ENCODE measurements at regions of chr20 and their contacts with region 1.

Region 1: GRCh38 chr20:1503564-1504227 is 12.5 kb upstream of the SIRPB2 start:
- DNase-seq: peak; percentile 85
- H3K4me3 Mint-ChIP-seq: no peak overlapping the region
- H3K27ac Mint-ChIP-seq: no peak overlapping the region
- H3K4me1 Mint-ChIP-seq: peaks cover 7% of the 10 kb centered on the region
- H3K27me3 Mint-ChIP-seq: peaks cover 57% of the 10 kb centered on the region

Region 2: DNA sequence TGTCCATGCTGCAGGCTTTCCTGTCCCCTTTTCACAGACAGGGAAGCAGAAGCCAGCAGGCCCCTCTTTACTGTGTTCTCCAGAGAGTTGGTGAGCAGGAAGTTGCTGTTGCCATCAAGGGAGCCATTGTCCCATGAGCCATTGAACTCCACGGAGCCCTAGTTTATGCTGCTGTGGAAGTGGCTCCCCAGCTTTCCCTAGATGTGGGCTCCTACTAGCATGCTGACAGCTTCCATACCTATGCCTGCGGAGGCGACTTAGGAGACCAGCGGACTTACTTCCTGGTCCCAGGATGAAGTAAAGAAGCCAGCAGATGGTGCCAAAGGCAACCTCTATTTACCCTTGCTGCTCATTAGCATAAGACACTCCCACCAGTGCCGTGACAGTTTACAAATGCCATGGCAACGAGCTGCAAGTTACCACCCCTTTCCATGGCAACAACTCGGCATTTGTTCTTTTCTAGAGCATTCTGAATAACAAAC is 80.0 kb before region 1 on chr20:
- CTCF ChIA-PET with region 1: no interaction called
- DNase-seq: peak; percentile 49
- H3K4me3 Mint-ChIP-seq: no peak overlapping the region
- H3K27ac Mint-ChIP-seq: no peak overlapping the region
- H3K4me1 Mint-ChIP-seq: peaks cover 33% of the 10 kb centered on the region
- H3K27me3 Mint-ChIP-seq: peaks cover 21% of the 10 kb centered on the region

Region 3: DNA sequence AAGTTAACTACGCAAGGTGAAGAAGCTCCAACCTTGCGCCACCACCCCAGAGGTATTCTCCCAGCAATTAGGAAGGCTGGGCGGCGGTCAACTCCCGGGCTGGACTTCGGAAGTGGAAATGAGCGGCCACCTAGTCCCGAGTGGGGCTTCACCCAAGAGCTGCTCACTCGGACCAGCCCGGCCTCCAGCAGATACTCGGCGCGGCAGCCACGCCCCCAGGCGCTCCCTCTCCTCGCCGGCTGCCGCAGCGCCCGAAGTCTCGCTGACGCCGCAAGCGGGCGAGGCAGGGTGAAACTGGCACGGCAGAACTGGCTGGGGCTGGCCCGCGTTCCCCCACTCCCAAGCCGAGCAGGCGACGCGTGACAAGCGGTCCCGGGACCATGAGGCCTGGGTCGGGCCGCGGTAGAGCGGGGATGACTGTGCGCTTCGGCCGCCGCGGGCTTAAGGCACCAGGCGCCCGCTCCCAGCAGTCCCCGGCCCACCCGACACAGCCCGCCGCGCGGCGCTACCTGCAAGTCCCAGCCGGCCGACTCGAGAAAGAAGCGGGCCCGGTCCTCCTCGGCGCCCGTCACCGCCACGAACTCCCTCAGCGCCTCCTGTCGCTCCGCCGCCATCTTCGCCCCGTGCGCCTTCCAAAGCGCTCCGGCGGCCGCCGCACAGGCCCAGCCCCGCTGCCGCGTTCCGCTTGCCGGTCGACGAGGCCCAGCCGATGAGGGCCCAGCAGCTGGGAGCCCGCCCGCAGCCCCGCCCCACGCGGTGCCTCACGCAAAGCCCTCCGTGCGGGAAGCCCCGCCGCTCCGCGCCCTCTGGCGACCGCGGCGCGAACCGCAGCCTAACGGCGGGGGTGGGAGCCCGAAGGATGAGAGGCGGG is 37.2 kb before region 1 on chr20 and contains the start of gene NSFL1C:
- CTCF ChIA-PET with region 1: interaction called, 19 read pairs
- DNase-seq: peak; percentile 97
- H3K4me3 Mint-ChIP-seq: peak within 1 kb of the TSS; percentile 78
- H3K27ac Mint-ChIP-seq: peak within 1 kb of the TSS; percentile 77
- H3K4me1 Mint-ChIP-seq: peaks cover 47% of the 10 kb centered on the region
- H3K27me3 Mint-ChIP-seq: peaks cover 30% of the 10 kb centered on the region

Region 4: DNA sequence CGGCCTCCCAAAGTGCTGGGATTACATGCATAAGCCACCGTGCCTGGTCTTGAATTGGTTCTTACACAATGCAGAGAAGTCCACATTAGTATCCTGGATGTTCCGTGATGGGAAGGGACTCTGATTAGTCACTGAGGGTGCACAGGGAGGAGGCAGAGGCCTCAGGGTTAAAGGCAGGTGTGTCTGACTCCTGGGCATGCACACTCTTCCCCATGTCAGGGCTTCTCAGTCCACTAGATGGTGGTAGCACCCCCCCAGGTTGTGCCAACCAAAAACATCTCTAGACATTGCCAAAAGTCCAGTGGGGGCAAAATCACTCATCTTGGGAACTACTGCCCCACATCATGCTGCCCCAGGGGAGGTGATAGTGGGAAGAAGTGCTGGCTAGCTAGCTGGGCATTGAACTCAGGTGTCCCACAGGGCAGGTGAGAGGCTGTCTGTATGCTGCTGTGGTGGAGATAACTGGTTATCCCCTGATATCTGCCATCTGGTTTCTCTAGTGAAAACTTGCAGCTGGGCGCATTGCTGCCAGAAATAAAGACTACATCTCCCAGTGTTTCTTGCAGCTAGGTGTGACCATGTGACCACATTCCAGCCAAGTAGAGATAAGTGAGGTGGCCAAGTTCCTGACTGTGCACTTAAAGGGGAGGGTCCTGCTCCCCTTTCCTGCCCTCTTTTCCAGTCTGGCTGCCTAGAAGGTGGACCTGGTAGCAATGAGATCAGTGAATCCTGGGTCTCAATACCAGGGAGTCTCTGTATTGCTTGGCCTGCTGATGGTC is 28.7 kb before region 1 on chr20:
- CTCF ChIA-PET with region 1: interaction called, 20 read pairs
- DNase-seq: peak; percentile 33
- H3K4me3 Mint-ChIP-seq: no peak overlapping the region
- H3K27ac Mint-ChIP-seq: no peak overlapping the region
- H3K4me1 Mint-ChIP-seq: no peaks in the 10 kb centered on the region
- H3K27me3 Mint-ChIP-seq: peaks cover 17% of the 10 kb centered on the region

Region 5: DNA sequence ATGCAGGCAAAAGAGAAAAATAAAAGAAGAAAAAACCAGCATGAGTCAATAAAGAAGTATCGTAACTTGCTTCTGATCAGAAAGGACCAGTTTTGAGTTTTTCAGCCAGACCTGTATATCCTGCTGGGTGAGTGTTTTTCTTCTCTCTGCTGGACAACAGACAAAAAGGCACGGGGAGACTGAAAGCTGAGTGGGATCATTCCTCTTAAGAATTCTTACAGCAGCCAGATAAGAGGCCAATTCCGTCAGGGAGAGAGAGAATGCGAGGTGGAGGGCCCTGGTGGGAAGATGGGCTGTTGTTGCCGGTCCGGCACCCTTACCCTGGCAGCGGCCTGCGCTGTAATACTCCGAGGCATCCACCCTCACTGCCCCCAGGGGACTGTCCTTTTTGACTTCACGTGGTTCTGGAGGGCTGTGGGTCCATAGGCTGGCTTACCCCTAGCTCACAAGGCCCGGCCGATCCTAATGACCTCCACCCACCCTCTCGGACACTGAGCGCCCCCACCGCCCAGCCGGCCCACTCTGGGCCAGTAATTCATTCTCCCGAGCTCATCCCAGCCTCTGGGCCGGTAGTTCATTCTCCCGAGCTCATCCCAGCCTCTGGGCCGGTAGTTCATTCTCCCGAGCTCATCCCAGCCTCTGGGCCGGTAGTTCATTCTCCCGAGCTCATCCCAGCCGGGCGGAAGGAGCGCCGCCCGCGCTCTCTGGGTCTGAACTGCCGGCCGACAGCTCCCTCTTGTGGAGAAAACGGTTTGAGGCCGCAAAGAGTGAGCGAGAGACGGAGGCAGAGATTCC is 273.2 kb after region 1 on chr20:
- CTCF ChIA-PET with region 1: interaction called, 76 read pairs
- DNase-seq: peak; percentile 87
- H3K4me3 Mint-ChIP-seq: peak overlapping the region; percentile 79
- H3K27ac Mint-ChIP-seq: no peak overlapping the region
- H3K4me1 Mint-ChIP-seq: peaks cover 14% of the 10 kb centered on the region
- H3K27me3 Mint-ChIP-seq: peaks cover 33% of the 10 kb centered on the region